Vagina (tissue), 2 donors: ENCODE measurements at regions of chr6 and their contacts with region 1.

Region 1: DNA sequence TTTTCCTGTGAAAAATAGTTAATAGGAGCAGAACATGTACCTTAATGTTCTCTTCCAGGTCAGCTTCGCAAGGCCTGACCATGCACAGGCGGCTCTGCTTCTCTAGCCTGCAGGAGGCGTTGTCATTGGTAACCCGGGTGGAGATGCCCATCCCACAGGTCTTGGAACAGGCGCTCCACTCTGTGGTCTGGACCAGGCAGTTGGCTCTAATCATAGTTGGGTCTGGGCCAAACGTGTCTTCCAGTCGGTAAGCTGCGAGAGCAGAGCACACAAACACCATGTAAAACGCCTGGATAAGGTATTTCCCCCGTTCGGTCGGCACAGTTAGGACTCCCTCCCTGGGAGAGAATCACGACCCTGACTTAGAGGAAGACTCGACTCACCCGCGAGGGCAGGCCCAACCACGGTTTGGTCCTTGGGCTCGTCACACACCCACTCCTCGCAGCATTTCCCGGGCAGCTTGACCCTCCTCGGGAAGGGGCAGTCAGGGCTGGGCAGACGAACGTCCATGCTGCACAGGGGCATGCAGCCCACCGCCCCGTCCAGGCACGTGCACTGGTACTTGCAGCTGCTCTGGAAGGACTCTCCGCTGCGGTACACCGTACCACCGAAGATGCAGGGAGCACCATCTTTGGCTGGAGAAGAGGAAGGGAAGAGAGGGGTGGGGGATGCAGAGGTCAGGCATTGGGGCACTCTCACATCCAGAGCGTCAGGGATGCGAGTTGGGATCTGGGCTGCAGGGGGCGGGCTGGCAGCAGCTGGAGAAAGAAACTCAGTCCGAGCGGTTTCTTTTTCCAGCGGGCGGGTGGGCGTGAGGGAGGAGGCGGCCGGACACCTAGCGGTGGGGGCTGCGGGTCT is 1.0 kb downstream of the CCN2 start:
- DNase-seq: no peak
- H3K4me3 ChIP-seq: peak overlapping the region; percentile 63 to 94
- H3K27ac ChIP-seq: peak overlapping the region; percentile 92
- H3K4me1 ChIP-seq: peaks cover 21% of the 10 kb centered on the region
- H3K27me3 ChIP-seq: no peaks in the 10 kb centered on the region
- CTCF ChIP-seq: peak in 2 of 3 experiments; percentile 40 to 44
- POLR2A ChIP-seq: no peak

Region 2: DNA sequence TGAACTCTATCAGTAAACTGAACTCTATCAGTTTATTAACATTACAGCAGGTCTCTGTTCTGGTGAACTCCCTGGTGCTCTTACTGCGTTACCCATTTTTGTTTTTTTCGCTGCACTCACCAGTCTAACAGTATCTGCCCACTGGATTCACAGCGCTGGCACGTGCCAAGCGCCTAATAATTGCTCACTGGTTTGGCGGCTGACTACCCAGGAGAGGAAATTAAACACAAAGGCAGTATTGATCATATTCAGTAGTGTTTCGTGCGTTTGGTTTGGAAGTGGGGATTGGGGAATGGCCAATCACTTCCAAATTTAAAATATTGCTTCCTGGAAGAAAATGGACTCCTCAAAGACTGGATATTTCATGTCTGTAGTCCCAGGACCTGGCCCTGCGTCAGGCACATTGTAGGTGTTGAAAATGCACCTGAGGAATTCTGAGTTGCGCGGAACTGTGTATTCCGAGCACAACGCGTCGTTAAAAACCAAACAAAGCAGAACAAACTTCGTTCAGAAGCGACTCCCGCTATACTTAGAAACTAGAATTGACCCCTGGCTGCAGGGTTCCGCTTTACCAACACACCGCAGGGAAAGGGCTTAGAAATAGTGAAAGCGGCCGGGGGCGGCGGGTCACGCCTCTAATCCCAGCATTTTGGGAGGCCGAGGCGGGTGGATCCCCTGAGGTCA is 863.2 kb after region 1 on chr6:
- intact Hi-C with region 1: loop called (anchors 10 kb)
- DNase-seq: no peak
- H3K4me3 ChIP-seq: peak overlapping the region; percentile 75 to 79
- H3K27ac ChIP-seq: peak overlapping the region; percentile 78
- H3K4me1 ChIP-seq: peaks cover 35% of the 10 kb centered on the region
- H3K27me3 ChIP-seq: no peaks in the 10 kb centered on the region
- CTCF ChIP-seq: no peak
- POLR2A ChIP-seq: no peak

Region 3: DNA sequence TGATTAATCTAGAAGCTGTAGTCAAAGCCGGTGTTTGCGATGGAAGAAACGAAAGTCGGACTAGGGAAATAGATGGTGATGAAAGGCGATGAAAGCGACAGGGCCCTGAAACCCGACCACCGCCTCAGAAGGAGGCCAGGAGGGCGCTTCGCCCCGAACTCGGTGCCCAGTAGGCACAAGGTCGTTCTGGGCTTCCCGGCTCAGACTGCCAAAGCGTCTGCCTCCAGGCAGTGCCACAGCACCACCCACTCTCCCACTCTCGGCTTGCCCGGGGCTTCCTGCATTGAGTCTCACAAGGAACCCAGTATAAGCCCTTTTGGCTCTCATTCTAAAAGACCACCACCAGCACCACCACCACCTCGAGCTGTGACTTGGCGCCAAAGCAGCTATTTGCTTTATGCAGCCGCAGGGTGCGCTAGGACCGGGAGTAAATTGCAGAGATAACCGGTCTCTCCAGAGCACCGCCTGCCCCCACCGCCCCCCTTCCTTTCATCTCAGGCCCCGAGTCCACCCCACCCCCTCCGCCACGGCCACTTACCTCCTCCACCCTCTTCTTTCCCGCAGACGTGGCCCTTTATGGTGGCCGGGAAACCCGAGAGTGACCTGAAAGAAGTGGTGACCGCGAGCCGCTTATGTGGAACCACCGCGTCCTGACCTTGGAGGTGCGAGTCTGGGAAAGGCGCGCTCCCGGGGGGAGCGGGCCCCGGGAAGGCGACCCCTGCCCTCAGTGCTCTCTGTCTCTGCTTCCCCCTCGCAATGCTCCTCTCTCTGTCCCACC is 1941.2 kb after region 1 on chr6:
- intact Hi-C with region 1: loop called (anchors 10 kb)
- DNase-seq: no peak
- H3K4me3 ChIP-seq: peak overlapping the region; percentile 54 to 55
- H3K27ac ChIP-seq: peak overlapping the region; percentile 86
- H3K4me1 ChIP-seq: peaks cover 41% of the 10 kb centered on the region
- H3K27me3 ChIP-seq: peaks cover 9% of the 10 kb centered on the region
- CTCF ChIP-seq: no peak
- POLR2A ChIP-seq: no peak